CD4-positive, alpha-beta memory T cell (primary cell): ENCODE measurements at regions of chr3 and their contacts with region 1.

Region 1: GRCh38 chr3:154252759-154253638 is 71.3 kb downstream of the DHX36 start:
- DNase-seq: peak; percentile 32 to 66 (median 38)
- H3K4me3 ChIP-seq: no peak overlapping the region
- H3K4me3 Mint-ChIP-seq: no peak overlapping the region
- H3K27ac ChIP-seq: no peak overlapping the region
- H3K27ac Mint-ChIP-seq: peak overlapping the region in 4 of 7 donors; percentile 2 to 52 (median 38)
- H3K4me1 ChIP-seq: no peaks in the 10 kb centered on the region
- H3K4me1 Mint-ChIP-seq: peaks cover 0 to 4% (median 1%) of the 10 kb centered on the region in 4 donors
- H3K27me3 ChIP-seq: no peaks in the 10 kb centered on the region
- H3K27me3 Mint-ChIP-seq: no peaks in the 10 kb centered on the region

Region 2: DNA sequence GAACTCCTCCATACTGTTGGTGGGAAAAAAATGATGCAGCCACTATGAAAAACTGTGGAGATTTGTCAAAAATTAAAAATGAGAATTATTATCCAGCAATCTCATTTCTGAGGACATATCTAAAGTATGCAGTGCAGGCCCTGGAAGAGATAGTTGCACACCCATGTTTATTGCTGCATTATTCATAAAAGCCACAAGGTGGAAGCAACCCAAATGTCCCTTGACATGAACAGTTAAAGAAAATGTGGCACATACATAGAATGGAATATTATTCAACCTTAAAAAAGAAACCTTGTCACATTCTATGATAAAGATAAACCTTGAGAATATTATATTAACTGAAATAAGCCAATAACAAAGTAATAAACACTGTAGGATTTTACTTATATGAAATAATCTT is 212.7 kb before region 1 on chr3:
- CTCF ChIA-PET with region 1: no interaction called
- POLR2A ChIA-PET with region 1: no interaction called
- intact Hi-C with region 1: loop called (anchors 2 kb)
- DNase-seq: no peak
- H3K4me3 ChIP-seq: no peak overlapping the region
- H3K4me3 Mint-ChIP-seq: no peak overlapping the region
- H3K27ac ChIP-seq: no peak overlapping the region
- H3K27ac Mint-ChIP-seq: no peak overlapping the region
- H3K4me1 ChIP-seq: no peaks in the 10 kb centered on the region
- H3K4me1 Mint-ChIP-seq: peaks cover 0 to 3% (median 0%) of the 10 kb centered on the region in 4 donors
- H3K27me3 ChIP-seq: no peaks in the 10 kb centered on the region
- H3K27me3 Mint-ChIP-seq: peaks cover 4% of the 10 kb centered on the region in 2 donors

Region 3: GRCh38 chr3:154095832-154096421 is 157.1 kb before region 1 on chr3:
- CTCF ChIA-PET with region 1: no interaction called
- POLR2A ChIA-PET with region 1: no interaction called
- intact Hi-C with region 1: loop called (anchors 5 kb)
- DNase-seq: no peak
- H3K4me3 ChIP-seq: no peak overlapping the region
- H3K4me3 Mint-ChIP-seq: no peak overlapping the region
- H3K27ac ChIP-seq: no peak overlapping the region
- H3K27ac Mint-ChIP-seq: no peak overlapping the region
- H3K4me1 ChIP-seq: no peaks in the 10 kb centered on the region
- H3K4me1 Mint-ChIP-seq: no peaks in the 10 kb centered on the region
- H3K27me3 ChIP-seq: no peaks in the 10 kb centered on the region
- H3K27me3 Mint-ChIP-seq: peaks cover 0 to 6% of the 10 kb centered on the region in 2 donors